SK-N-SH (cell line): ENCODE measurements at regions of chr12 and their contacts with region 1.

Region 1: DNA sequence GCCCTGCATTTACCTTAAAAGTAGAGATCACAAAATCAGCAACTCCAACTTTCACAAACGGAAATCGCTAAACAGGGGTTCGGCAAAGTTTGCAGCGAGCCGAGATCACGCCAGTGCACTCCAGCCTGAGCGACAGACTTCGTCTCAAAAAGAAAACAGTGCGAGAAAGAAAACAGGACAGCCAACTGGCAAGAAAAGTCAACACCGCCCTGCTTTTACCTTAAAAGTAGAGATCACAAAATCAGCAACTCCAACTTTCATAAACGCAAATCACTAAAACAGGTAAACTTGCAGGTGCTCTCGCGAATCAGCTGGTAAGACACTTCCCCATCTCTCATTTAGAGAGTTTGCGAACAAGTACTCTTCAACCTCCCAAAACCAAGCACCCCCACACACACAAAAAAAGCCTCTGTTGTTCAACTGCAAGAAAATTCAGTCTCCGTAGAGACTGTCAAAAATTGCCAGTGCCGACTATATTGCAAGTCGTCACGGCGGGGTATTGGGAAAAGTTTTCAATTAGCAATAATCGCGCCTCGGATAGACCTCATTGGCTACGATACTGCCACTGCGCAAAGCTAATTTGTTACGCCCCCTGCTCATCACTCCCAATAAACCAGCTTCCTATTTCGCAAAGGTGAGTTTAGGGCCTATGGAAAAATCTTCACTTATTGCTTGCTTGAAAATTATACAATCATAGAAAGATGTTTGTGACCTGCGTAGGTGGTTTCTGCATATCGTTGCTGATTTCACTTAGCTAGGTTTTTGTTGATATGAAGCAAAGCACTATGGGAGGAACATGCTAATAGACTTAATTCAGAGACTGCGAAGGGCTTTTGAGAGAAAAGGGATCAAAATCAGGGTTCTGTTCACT is at the start of gene RNU4-1:
- DNase-seq: peak; percentile 57
- H3K4me3 ChIP-seq: peak within 1 kb of the TSS; percentile 50 to 70
- H3K27ac ChIP-seq: peak within 1 kb of the TSS; percentile 98 to 100
- H3K4me1 ChIP-seq: peaks cover 0 to 2% of the 10 kb centered on the region in 2 experiments; a peak in 2 of 4 replicates
- H3K27me3 ChIP-seq: no peaks in the 10 kb centered on the region
- CTCF ChIP-seq: no peak
- EP300 ChIP-seq: peak in 1 of 2 experiments; percentile 67; a peak in 1 of 4 replicates
- RAD21 ChIP-seq: no peak
- polyA plus RNA-seq, gene RNU4-1: not detected in 2 replicates

Region 2: DNA sequence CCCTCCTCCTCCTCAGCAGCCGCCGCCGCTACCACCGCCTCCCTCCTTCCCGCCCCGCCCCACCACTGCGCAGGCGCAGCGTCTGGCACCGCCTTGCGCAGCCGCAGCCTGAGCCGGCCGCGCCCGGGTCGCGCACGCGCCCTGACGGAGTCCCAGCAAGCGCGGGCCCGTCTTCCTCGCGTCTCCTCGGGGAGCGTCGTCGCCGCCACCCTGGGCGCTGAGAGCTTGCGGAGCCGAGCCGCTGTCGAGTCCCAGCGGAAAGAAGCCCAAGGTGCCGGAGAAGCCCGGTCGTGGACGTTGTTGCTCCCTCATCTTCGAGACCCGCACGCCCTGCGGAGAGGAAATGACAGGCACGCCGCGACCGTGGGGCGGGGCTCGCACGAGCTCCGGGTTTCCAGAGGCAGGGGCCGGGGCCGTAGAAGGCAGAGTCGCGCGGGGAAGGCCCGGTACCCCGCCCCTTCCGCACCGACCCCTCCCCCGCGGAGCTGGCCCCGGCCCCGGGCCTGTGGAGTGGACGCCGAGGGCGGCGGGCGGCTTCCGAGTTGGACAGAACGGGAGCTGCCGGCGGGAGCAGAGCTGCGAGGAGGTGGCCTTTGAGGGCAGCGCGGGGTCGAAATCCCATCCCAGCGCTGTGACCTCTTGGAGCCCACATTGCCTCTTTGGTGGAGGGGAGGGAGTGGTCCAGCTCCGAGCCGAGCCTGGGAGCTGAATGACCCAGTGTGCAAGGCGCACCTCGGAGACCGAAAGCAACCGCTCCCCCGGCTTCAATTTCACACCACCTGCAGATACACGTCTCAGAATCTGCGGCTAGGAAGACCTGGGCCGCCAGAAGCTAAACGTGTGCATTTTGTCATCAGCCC is 175.9 kb before region 1 on chr12:
- CTCF ChIA-PET with region 1: no interaction called
- POLR2A ChIA-PET with region 1: interaction called, 16 read pairs
- DNase-seq: peak; percentile 100
- H3K4me3 ChIP-seq: peak overlapping the region; percentile 71 to 83
- H3K27ac ChIP-seq: peak overlapping the region; percentile 85 to 90
- H3K4me1 ChIP-seq: peaks cover 18 to 25% of the 10 kb centered on the region in 2 experiments
- H3K27me3 ChIP-seq: no peaks in the 10 kb centered on the region
- CTCF ChIP-seq: no peak
- EP300 ChIP-seq: no peak
- RAD21 ChIP-seq: no peak

Region 3: GRCh38 chr12:120156315-120157259 is 136.3 kb before region 1 on chr12:
- CTCF ChIA-PET with region 1: no interaction called
- POLR2A ChIA-PET with region 1: no interaction called
- DNase-seq: no peak
- H3K4me3 ChIP-seq: no peak overlapping the region
- H3K27ac ChIP-seq: no peak overlapping the region
- H3K4me1 ChIP-seq: no peaks in the 10 kb centered on the region
- H3K27me3 ChIP-seq: no peaks in the 10 kb centered on the region
- CTCF ChIP-seq: no peak
- EP300 ChIP-seq: no peak
- RAD21 ChIP-seq: no peak

Region 4: GRCh38 chr12:120241561-120242274 is 51.2 kb before region 1 on chr12:
- CTCF ChIA-PET with region 1: no interaction called
- POLR2A ChIA-PET with region 1: interaction called, 10 read pairs
- DNase-seq: no peak
- H3K4me3 ChIP-seq: no peak overlapping the region
- H3K27ac ChIP-seq: no peak overlapping the region
- H3K4me1 ChIP-seq: peaks cover 22 to 39% of the 10 kb centered on the region in 2 experiments; a peak in 3 of 4 replicates
- H3K27me3 ChIP-seq: no peaks in the 10 kb centered on the region
- CTCF ChIP-seq: no peak
- EP300 ChIP-seq: no peak
- RAD21 ChIP-seq: no peak

Region 5: GRCh38 chr12:120265473-120266179 is 27.3 kb before region 1 on chr12 and contains the start of gene PXN:
- CTCF ChIA-PET with region 1: interaction called, 27 read pairs
- POLR2A ChIA-PET with region 1: interaction called, 38 read pairs
- DNase-seq: peak; percentile 100
- H3K4me3 ChIP-seq: peak within 1 kb of the TSS; percentile 73 to 83
- H3K27ac ChIP-seq: peak within 1 kb of the TSS; percentile 51 to 57; a peak in 2 of 4 replicates
- H3K4me1 ChIP-seq: peaks cover 22 to 27% of the 10 kb centered on the region in 2 experiments; a peak in 3 of 4 replicates
- H3K27me3 ChIP-seq: no peaks in the 10 kb centered on the region
- CTCF ChIP-seq: peak; percentile 73
- EP300 ChIP-seq: no peak
- RAD21 ChIP-seq: peak; percentile 87
- polyA plus RNA-seq, gene PXN: 63.0 and 89.0 TPM in 2 replicates

Region 6: DNA sequence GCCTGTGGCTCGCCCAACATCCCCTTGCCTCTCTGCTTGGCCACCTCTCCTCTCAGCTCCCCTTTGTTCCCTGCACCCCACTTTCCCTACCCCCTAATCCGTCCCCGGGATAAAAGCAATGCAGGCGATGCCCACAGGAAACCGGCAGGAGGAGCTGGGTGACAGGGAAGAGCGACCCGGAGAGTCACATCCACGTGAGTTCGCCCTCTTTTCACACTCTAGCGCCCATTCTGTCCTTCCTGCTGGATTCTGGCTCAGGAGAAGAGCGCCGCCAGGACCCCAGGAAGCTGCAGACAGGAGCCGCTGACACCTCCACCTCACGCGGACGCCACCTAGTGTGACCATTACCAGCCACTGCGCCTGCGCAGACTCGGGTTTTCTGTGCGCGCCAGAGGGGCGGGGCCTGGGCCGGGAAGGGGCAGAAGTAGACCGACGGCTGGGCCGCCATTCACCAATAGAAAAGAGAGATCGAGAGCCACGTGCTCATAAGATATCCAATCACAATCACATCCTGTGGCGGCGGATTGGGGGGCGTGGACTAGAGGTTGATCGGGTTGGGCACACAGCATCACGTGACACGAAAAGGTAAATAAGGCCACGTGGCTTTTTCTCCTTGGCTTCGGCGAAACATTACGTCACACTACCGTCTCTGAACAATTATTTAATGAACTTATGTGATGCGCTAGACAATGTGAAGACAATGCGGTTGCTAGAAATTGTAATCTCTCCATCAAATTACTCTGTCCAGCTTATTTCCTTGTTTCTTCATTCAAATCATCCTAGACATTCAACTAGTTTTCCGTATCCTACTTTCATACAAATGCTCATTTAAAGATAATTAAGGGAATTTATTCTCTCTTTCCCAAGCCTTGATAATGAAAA is 24.6 kb after region 1 on chr12:
- CTCF ChIA-PET with region 1: interaction called, 7 read pairs
- POLR2A ChIA-PET with region 1: interaction called, 18 read pairs
- DNase-seq: peak; percentile 96
- H3K4me3 ChIP-seq: peak overlapping the region; percentile 57 to 86
- H3K27ac ChIP-seq: peak overlapping the region; percentile 40 to 72; a peak in 3 of 4 replicates
- H3K4me1 ChIP-seq: peaks cover 4 to 5% of the 10 kb centered on the region in 2 experiments; a peak in 2 of 4 replicates
- H3K27me3 ChIP-seq: no peaks in the 10 kb centered on the region
- CTCF ChIP-seq: peak; percentile 69
- EP300 ChIP-seq: no peak
- RAD21 ChIP-seq: peak; percentile 31; the same call in 1 of the 2 replicates